ENCODE measurements at regions of chr3 and their contacts with region 1.

Region 1: DNA sequence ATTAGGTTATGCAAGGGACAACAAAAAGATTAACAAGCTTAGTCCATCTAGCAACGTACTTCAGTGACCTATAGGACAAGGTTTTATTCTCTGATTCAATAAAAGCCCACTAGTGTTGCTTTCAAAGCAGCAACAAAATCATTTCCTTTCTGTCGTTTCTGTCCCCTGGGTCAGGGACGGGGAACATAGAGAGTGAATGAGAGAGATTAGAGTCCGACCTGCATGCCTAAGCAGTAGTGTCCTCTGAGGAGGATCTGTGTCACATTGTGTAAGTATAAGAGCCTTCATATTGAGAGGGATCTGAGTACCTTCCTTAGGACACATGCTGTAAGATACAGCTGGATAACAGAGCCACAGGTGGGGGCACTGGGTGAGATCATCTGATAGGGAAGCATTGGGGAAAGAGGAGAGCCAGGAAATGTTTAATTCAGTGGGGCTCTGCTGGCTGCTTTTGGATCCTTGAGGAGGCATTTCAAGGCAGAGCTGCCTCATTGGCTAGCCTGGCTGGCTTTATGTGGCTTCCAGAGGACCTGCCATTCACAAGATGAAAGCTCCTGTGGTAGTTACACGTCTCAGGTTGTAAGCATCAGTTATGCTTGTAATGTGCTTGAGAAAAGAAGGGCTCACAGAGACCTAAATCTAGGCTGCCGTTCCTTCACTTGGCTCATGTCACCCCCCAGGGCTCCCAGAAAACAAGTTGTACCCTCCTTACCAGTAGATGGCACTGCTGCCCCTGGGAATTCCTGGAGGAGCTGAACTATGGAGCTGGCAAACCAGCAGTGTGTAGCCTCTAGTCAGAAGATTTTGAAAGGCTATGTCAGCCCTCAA is 2.7 kb downstream of the TMEM108 start:
- DNase-seq: peak; percentile 51 to 78
- ATAC-seq: peak; percentile 62 to 86 (median 83)
- H3K4me3 ChIP-seq: no peak overlapping the region
- H3K27ac ChIP-seq: peak overlapping the region in 1 of 10 donors; percentile 20
- H3K4me1 ChIP-seq: peaks cover 0 to 24% (median 13%) of the 10 kb centered on the region in 9 donors
- H3K27me3 ChIP-seq: peaks cover 6 to 53% (median 46%) of the 10 kb centered on the region in 7 donors
- CTCF ChIP-seq: peak; percentile 33 to 83 (median 76)

Region 2: GRCh38 chr3:132317229-132317948 is 723.5 kb before region 1 on chr3 and contains the start of gene ACP3:
- intact Hi-C with region 1: no loop called
- DNase-seq: peak; percentile 34 to 40
- ATAC-seq: peak; percentile 72 to 94 (median 88)
- H3K4me3 ChIP-seq: peak within 1 kb of the TSS in 4 of 10 donors; percentile 22 to 35 (median 24)
- H3K27ac ChIP-seq: peak within 1 kb of the TSS in 7 of 10 donors; percentile 20 to 84 (median 28)
- H3K4me1 ChIP-seq: peaks cover 0 to 29% (median 8%) of the 10 kb centered on the region in 9 donors
- H3K27me3 ChIP-seq: no peaks in the 10 kb centered on the region
- CTCF ChIP-seq: no peak
- total RNA-seq, gene ACP3: 0.09 to 3.3 (median 0.91) TPM in 8 of 10 donors, not detected in the others

Region 3: DNA sequence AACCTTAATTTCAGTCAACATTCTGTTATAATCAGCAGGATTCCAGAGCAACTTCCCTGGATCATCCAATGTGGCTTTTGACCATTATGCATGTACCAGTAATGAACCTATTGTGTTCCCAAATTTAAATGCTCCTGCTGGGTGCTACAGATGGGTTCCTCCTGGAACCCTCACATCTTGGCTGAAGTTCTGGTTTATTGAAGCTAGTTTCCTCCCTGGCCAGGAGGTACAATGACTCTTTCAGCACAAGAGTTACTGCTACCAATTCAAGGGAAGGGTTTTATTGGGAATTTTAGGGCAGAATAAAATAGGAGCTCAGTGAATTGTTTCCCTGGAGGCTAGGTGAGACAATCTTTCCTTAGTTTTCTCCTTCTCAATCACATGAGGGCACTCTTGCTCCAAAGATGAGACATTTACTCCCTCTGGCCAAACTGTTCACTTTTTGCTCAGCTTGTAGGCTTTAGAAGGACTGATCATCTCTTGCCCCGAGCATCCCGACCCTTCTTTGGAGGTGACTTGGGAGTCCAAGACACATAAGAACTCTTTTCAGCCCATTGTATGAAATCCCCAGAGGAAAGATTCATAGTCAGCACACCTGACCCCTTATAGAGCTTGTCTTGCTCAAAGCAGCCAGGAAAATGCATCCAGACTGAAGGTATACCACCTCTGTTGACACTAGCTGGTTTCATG is 309.9 kb before region 1 on chr3:
- intact Hi-C with region 1: loop called in 7 of 10 experiments (anchors 2 to 10 kb)
- DNase-seq: peak in 1 of 2 donors; percentile 21
- ATAC-seq: peak; percentile 59 to 83 (median 75)
- H3K4me3 ChIP-seq: no peak overlapping the region
- H3K27ac ChIP-seq: no peak overlapping the region
- H3K4me1 ChIP-seq: peaks cover 0 to 5% (median 0%) of the 10 kb centered on the region in 9 donors
- H3K27me3 ChIP-seq: peaks cover 0 to 20% (median 0%) of the 10 kb centered on the region in 7 donors
- CTCF ChIP-seq: peak in 8 of 9 donors; percentile 17 to 64 (median 50)

Region 4: GRCh38 chr3:133159498-133160475 is 118.9 kb after region 1 on chr3:
- intact Hi-C with region 1: no loop called
- DNase-seq: no peak
- ATAC-seq: no peak
- H3K4me3 ChIP-seq: no peak overlapping the region
- H3K27ac ChIP-seq: no peak overlapping the region
- H3K4me1 ChIP-seq: no peaks in the 10 kb centered on the region
- H3K27me3 ChIP-seq: no peaks in the 10 kb centered on the region
- CTCF ChIP-seq: no peak

Region 5: GRCh38 chr3:133283958-133284807 is 243.3 kb after region 1 on chr3:
- intact Hi-C with region 1: loop called in 1 of 10 experiments (anchors 10 kb)
- DNase-seq: no peak
- ATAC-seq: no peak
- H3K4me3 ChIP-seq: no peak overlapping the region
- H3K27ac ChIP-seq: no peak overlapping the region
- H3K4me1 ChIP-seq: no peaks in the 10 kb centered on the region
- H3K27me3 ChIP-seq: no peaks in the 10 kb centered on the region
- CTCF ChIP-seq: no peak

Region 6: GRCh38 chr3:133377396-133377795 is 336.5 kb after region 1 on chr3:
- intact Hi-C with region 1: loop called (anchors 1 to 5 kb)
- DNase-seq: no peak
- ATAC-seq: peak; percentile 27 to 82 (median 60)
- H3K4me3 ChIP-seq: no peak overlapping the region
- H3K27ac ChIP-seq: no peak overlapping the region
- H3K4me1 ChIP-seq: peaks cover 0 to 6% (median 2%) of the 10 kb centered on the region in 9 donors
- H3K27me3 ChIP-seq: peaks cover 0 to 5% (median 0%) of the 10 kb centered on the region in 7 donors
- CTCF ChIP-seq: peak in 8 of 9 donors; percentile 43 to 61 (median 50)

Region 7: GRCh38 chr3:133384331-133385027 is 343.6 kb after region 1 on chr3:
- intact Hi-C with region 1: loop called in 8 of 10 experiments (anchors 1 to 5 kb)
- DNase-seq: peak; percentile 55 to 60
- ATAC-seq: peak; percentile 87 to 93 (median 89)
- H3K4me3 ChIP-seq: no peak overlapping the region
- H3K27ac ChIP-seq: no peak overlapping the region
- H3K4me1 ChIP-seq: peaks cover 0 to 7% (median 0%) of the 10 kb centered on the region in 9 donors
- H3K27me3 ChIP-seq: peaks cover 0 to 9% (median 0%) of the 10 kb centered on the region in 7 donors
- CTCF ChIP-seq: peak; percentile 46 to 86 (median 78)

Region 8: GRCh38 chr3:133426721-133427120 is 385.8 kb after region 1 on chr3:
- intact Hi-C with region 1: loop called in 3 of 10 experiments (anchors 2 to 5 kb)
- DNase-seq: no peak
- ATAC-seq: no peak
- H3K4me3 ChIP-seq: no peak overlapping the region
- H3K27ac ChIP-seq: no peak overlapping the region
- H3K4me1 ChIP-seq: peaks cover 0 to 5% (median 0%) of the 10 kb centered on the region in 9 donors
- H3K27me3 ChIP-seq: peaks cover 0 to 25% (median 13%) of the 10 kb centered on the region in 7 donors
- CTCF ChIP-seq: no peak

Measured in heart right ventricle (tissue), 16 donors.